ENCODE measurements at regions of chr3 and their contacts with region 1.

Region 1: GRCh38 chr3:72818092-72818773 is 30.0 kb downstream of the SHQ1 start:
- DNase-seq: peak; percentile 37
- H3K4me3 Mint-ChIP-seq: no peak overlapping the region
- H3K27ac Mint-ChIP-seq: no peak overlapping the region
- H3K4me1 Mint-ChIP-seq: peaks cover 6% of the 10 kb centered on the region
- H3K27me3 Mint-ChIP-seq: no peaks in the 10 kb centered on the region
- CTCF ChIP-seq: peak; percentile 80

Region 2: GRCh38 chr3:71725279-71725991 is 1092.8 kb before region 1 on chr3 and contains the start of gene EIF4E3:
- CTCF ChIA-PET with region 1: interaction called, 58 read pairs
- POLR2A ChIA-PET with region 1: no interaction called
- intact Hi-C with region 1: no loop called
- DNase-seq: peak; percentile 17
- H3K4me3 Mint-ChIP-seq: peak within 1 kb of the TSS; percentile 77
- H3K27ac Mint-ChIP-seq: peak within 1 kb of the TSS; percentile 5
- H3K4me1 Mint-ChIP-seq: no peaks in the 10 kb centered on the region
- H3K27me3 Mint-ChIP-seq: no peaks in the 10 kb centered on the region
- CTCF ChIP-seq: no peak
- total RNA-seq, gene EIF4E3: 4.3 and 7.6 TPM in 2 replicates

Region 3: GRCh38 chr3:71949442-71949841 is 868.8 kb before region 1 on chr3:
- CTCF ChIA-PET with region 1: interaction called, 80 read pairs
- POLR2A ChIA-PET with region 1: interaction called, 3 read pairs
- intact Hi-C with region 1: no loop called
- DNase-seq: no peak
- H3K4me3 Mint-ChIP-seq: no peak overlapping the region
- H3K27ac Mint-ChIP-seq: no peak overlapping the region
- H3K4me1 Mint-ChIP-seq: no peaks in the 10 kb centered on the region
- H3K27me3 Mint-ChIP-seq: peaks cover 60% of the 10 kb centered on the region
- CTCF ChIP-seq: no peak

Region 4: DNA sequence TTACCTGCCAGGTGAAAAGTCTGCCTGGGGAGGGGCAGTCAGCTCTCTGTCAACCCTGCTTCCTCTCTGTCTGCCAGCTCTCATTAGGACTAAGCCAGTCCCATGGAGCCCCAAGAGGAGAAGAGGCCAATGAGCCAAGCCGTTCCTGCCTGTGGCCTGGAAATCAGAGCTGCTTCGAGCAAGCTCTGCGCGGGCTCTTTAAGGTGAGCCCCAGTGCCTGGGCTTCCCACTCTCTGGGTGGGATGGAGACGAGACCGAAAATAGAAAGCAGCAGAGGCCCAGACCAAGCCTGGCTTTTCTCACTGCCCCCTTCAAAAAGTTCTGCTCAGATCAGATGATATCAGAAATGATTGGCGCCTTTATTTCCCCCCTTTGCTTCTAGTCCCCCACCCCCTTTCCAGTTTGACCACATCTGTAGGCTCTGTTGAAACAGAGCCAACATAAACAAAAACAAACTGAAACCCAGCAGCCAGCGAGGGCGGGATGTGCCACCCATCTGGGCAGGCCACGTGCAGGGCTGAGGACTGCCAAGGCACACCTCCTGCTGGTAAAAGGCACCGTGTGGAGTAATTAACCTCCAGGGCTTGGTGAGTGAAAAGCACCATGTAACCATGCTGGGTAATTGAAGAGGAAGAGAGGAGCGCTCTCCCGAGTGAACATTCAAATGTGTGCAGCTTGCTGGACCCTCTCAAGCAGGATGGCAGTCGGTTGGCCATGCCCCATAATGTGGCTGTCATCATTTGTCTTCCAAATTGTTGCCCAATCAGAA is 562.3 kb before region 1 on chr3:
- CTCF ChIA-PET with region 1: no interaction called
- POLR2A ChIA-PET with region 1: no interaction called
- intact Hi-C with region 1: loop called (anchors 5 kb)
- DNase-seq: peak; percentile 92
- H3K4me3 Mint-ChIP-seq: no peak overlapping the region
- H3K27ac Mint-ChIP-seq: peak overlapping the region; percentile 51
- H3K4me1 Mint-ChIP-seq: peaks cover 9% of the 10 kb centered on the region
- H3K27me3 Mint-ChIP-seq: peaks cover 70% of the 10 kb centered on the region
- CTCF ChIP-seq: peak; percentile 13

Region 5: GRCh38 chr3:72447059-72447946 is 370.9 kb before region 1 on chr3:
- CTCF ChIA-PET with region 1: interaction called, 3 read pairs
- POLR2A ChIA-PET with region 1: interaction called, 7 read pairs
- intact Hi-C with region 1: loop called (anchors 1 kb)
- DNase-seq: peak; percentile 87
- H3K4me3 Mint-ChIP-seq: peak overlapping the region; percentile 88
- H3K27ac Mint-ChIP-seq: no peak overlapping the region
- H3K4me1 Mint-ChIP-seq: peaks cover 33% of the 10 kb centered on the region
- H3K27me3 Mint-ChIP-seq: peaks cover 21% of the 10 kb centered on the region
- CTCF ChIP-seq: no peak

Region 6: DNA sequence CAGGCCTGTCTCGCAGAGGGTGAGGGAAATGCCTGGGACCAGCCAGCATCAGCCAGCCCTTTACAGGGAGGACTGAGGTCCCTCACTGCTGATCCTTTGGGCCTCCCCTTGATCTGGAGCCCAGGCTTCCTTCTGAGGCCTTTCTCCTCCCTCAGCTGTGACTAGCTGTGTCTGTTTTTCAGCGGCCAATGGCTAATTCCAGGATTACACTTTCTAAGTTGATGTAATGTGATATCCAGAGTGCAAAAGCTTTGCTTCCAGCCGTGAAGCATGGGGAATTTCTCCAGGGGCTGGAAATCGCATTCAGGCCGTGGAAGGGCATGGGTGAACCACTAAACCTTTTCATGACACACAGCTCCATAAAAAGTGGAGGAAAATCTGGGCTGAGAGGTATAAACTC is 127.6 kb before region 1 on chr3:
- CTCF ChIA-PET with region 1: no interaction called
- POLR2A ChIA-PET with region 1: no interaction called
- intact Hi-C with region 1: no loop called
- DNase-seq: no peak
- H3K4me3 Mint-ChIP-seq: no peak overlapping the region
- H3K27ac Mint-ChIP-seq: no peak overlapping the region
- H3K4me1 Mint-ChIP-seq: no peaks in the 10 kb centered on the region
- H3K27me3 Mint-ChIP-seq: no peaks in the 10 kb centered on the region
- CTCF ChIP-seq: no peak

Region 7: DNA sequence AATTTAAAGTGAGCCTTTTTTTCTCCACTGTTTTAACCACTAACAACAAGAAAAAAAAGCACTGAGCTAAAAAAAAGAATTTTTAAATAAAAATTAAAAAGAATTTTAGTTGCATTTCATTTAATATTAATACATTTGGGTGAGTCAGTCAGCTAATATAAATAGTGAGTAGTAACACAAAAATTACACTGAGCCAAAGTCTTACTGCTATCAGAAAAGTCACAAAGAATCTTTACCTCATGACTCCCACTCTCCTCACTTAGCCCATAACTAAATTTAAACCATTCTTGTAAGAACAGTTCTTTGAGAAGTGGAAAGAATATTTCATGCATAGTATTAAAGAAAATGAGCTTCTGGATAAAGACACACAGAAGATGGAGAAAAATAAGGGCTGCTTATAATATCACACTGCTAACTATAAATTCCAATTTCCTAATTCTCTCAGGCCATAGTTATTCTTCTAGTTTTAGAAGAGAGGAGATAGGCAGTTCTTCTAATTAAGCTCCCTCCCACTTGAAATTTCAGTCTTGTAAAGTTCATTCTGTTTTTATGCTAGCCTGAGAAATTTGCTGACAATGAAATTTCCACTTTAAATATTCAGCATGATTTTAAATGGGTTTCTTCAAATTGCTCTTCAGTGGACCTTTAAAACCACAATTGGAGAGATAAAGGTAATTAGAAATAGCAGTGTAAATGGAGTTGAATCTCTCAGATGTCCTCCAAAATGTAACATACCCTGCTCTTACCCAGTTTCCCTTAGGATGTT is 12.4 kb after region 1 on chr3:
- CTCF ChIA-PET with region 1: interaction called, 10 read pairs
- POLR2A ChIA-PET with region 1: no interaction called
- intact Hi-C with region 1: no loop called
- DNase-seq: no peak
- H3K4me3 Mint-ChIP-seq: no peak overlapping the region
- H3K27ac Mint-ChIP-seq: no peak overlapping the region
- H3K4me1 Mint-ChIP-seq: no peaks in the 10 kb centered on the region
- H3K27me3 Mint-ChIP-seq: no peaks in the 10 kb centered on the region
- CTCF ChIP-seq: no peak

Region 8: DNA sequence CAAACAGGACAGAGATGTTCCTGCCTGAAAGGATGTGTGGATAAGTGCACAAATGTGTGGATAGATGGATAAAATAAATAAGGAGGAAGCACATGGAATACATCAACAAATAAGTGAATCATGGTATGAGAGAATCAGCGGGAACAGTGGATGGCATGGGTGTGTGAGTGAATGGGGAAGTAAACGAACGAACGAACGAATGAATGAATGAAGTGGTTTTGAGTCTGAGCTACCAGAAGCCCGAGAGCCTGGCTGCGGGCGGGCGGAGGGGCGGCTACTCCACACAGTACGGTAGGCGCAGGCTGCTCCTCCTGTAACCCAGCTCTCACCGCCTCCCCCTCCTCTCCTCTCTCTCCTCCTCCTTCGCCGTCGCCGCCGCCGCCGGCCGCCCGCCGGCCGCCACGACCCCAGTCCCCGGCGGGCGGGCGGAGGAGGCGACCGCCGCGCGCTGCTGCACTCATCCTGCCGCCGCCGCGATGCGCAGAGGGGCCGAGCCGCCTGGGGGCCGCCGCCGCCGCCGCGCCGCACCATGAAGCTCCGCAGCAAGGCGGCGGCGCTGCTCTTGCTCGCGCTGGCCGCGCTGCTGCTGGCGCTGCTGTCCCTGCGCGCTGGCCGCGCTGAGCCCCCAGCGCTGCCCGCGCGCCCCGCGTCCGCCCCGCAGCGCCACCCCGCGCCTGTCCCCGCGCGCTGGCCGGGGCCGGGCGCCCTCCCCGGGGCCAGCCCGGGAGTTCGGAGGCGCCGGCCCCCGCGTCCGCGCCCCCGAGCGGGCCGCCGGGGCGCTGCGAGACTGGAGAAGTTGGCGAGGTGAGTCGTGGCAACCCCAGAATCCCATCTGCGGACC is 69.7 kb after region 1 on chr3 and contains the start of gene GXYLT2:
- CTCF ChIA-PET with region 1: no interaction called
- POLR2A ChIA-PET with region 1: no interaction called
- intact Hi-C with region 1: no loop called
- DNase-seq: peak; percentile 63
- H3K4me3 Mint-ChIP-seq: peak within 1 kb of the TSS; percentile 79
- H3K27ac Mint-ChIP-seq: no peak within 1 kb of the TSS
- H3K4me1 Mint-ChIP-seq: peaks cover 40% of the 10 kb centered on the region
- H3K27me3 Mint-ChIP-seq: no peaks in the 10 kb centered on the region
- CTCF ChIP-seq: no peak
- total RNA-seq, gene GXYLT2: 3.9 and 4.1 TPM in 2 replicates

Region 9: DNA sequence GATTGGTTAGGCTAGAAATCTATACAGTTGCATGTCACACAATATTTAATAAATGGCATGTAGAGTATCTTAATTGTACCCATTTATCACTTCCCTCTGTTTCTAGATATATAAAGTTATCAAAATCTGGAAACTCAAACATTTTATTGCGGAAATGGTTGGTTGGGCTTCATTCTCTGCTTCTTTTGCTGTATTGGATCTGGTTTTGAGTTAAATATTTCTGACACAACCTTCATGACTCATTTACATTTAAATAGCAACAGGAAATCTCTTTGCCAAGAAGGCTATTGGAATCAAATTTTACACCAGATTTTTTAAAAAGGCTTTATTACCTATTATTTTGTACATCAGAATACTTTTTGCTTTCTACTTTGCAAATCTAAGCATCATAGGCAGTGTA is 397.0 kb after region 1 on chr3:
- CTCF ChIA-PET with region 1: no interaction called
- POLR2A ChIA-PET with region 1: no interaction called
- intact Hi-C with region 1: no loop called
- DNase-seq: no peak
- H3K4me3 Mint-ChIP-seq: no peak overlapping the region
- H3K27ac Mint-ChIP-seq: no peak overlapping the region
- H3K4me1 Mint-ChIP-seq: no peaks in the 10 kb centered on the region
- H3K27me3 Mint-ChIP-seq: no peaks in the 10 kb centered on the region
- CTCF ChIP-seq: no peak

Region 10: DNA sequence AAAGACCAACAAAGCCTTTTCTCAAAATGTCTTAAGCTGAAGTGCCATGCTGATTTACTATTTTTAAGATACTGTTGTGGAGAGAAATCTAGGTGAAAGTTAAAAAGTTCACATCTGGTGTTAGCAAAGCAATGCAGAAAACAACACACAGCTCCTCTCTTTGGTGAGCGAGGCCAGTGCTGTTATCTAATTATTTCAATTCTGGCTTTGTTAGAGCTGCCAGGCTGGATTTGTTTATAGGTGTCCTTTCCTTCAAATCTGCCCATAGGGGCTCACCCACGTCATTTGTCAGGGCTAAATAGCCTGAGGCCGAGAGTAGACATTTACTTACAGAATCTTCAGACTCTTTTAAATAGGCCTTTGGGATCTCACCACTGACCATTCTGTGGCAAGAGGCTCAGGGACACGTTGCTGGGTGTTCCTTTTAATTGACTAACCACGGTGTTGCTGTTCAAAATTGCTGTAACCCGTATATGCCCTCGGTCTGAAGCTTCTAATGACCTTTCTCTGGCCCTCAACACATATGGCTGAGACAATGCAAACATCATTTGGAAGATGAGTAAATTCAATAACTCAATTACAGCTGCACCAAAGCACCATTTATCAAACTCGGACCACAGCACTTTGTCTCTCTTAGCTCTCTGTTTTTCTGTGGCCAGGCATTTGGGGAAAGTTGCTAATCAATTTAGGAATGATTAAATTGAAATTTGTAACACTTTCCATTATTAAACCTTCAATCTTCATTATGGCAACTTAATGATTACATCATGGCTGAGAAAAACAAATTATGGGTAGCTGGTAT is 654.0 kb after region 1 on chr3:
- CTCF ChIA-PET with region 1: no interaction called
- POLR2A ChIA-PET with region 1: no interaction called
- intact Hi-C with region 1: no loop called
- DNase-seq: no peak
- H3K4me3 Mint-ChIP-seq: no peak overlapping the region
- H3K27ac Mint-ChIP-seq: no peak overlapping the region
- H3K4me1 Mint-ChIP-seq: no peaks in the 10 kb centered on the region
- H3K27me3 Mint-ChIP-seq: peaks cover 8% of the 10 kb centered on the region
- CTCF ChIP-seq: no peak

Measured in MCF 10A (cell line).